ENCODE measurements at regions of chr5 and their contacts with region 1.

Region 1: DNA sequence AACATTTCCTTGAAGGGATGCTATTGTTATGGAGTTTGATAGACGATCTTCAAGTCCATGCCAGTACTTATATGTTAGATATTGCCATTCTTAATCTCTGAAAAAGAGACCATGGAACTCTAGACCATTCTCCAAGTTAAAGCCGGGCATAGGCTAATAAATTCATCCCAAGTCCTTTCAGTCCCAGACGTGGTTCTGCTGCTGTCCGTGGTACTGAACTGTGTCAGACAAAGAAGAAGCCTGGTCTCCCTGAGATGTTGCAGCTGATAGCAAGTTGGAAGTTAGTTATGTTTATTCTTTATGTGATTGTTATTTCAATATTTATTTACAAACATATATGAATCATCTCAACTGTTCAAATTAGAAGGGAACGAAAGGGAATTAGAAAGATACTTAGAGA is 158.7 kb downstream of the NMUR2 start:
- DNase-seq: no peak
- H3K4me3 ChIP-seq: no peak overlapping the region
- H3K27ac ChIP-seq: no peak overlapping the region
- H3K4me1 ChIP-seq: no peaks in the 10 kb centered on the region
- H3K27me3 ChIP-seq: no peaks in the 10 kb centered on the region
- CTCF ChIP-seq: no peak

Region 2: DNA sequence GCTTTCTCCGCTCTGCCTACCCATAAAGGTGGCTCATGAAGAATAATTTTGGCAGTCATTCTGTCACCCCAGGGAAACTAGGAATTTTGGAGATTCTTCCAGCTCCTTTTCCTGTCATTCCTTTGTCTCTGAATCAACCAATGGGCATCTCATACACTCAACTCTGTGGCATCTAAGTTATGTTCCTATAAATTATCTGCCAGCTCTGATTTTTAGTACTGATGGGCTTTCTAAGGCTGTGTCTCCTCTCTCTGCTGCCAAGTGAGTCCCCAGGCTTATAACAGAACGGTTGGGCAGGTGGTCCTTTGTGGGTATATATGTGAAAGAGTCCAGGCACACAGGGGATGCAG is 68.1 kb before region 1 on chr5:
- CTCF ChIA-PET with region 1: no interaction called
- POLR2A ChIA-PET with region 1: interaction called, 18 read pairs
- intact Hi-C with region 1: no loop called
- DNase-seq: no peak
- H3K4me3 ChIP-seq: no peak overlapping the region
- H3K27ac ChIP-seq: no peak overlapping the region
- H3K4me1 ChIP-seq: peaks cover 10% of the 10 kb centered on the region
- H3K27me3 ChIP-seq: no peaks in the 10 kb centered on the region
- CTCF ChIP-seq: no peak

Region 3: DNA sequence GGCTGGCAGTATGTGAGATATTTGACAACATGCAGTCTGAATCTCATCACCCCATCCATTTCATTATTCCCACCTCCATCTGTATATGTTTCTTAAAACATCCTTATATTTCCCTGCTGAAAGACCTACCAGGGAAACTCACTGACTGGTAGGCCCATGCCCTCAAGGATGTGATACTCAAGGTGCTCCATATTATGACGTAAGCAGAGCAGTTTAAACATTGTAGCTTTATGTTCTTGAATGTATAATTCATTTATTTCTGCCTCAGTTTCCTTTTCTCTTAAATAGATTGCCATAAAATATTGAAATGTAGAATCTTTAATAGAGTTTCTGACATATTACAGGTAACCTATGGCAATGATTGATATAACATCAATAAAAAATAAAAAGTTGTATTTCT is 371.7 kb after region 1 on chr5:
- CTCF ChIA-PET with region 1: no interaction called
- POLR2A ChIA-PET with region 1: no interaction called
- intact Hi-C with region 1: no loop called
- DNase-seq: no peak
- H3K4me3 ChIP-seq: no peak overlapping the region
- H3K27ac ChIP-seq: no peak overlapping the region
- H3K4me1 ChIP-seq: no peaks in the 10 kb centered on the region
- H3K27me3 ChIP-seq: no peaks in the 10 kb centered on the region
- CTCF ChIP-seq: no peak

Measured in PC-9 (cell line).